ENCODE measurements at regions of chr5 and their contacts with region 1.

Region 1: GRCh38 chr5:91225848-91226686 is 157.1 kb downstream of the ARRDC3 start:
- DNase-seq: peak; percentile 59
- ATAC-seq: peak; percentile 96
- H3K4me3 ChIP-seq: no peak overlapping the region
- H3K27ac ChIP-seq: no peak overlapping the region
- H3K4me1 ChIP-seq: 0 out of 4 replicates have a peak, but pooled peaks cover 0 to 5% of the 10 kb centered on the region in 2 experiments
- H3K27me3 ChIP-seq: no peaks in the 10 kb centered on the region
- CTCF ChIP-seq: peak; percentile 58 to 98 (median 74)
- POLR2A ChIP-seq: no peak
- RAD21 ChIP-seq: peak; percentile 98

Region 2: DNA sequence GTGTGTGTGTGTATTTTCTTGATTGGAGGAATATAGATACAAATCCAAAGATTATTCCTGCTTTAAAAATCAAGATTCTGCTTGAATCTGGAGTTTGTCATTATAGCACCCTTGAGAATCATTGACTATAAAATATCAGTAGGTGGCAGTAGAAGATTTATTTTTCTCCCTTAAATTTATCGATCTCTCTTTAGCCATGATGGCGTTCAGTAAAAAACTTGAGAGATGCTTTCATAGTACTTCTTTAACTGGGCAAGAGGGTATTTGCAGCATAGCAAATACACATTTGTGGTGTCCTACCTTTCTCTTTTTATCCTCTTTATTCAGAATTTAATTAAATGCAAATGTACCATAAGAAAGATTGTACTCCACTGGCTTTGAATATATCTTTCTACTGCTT is 359.7 kb before region 1 on chr5:
- CTCF ChIA-PET with region 1: no interaction called
- POLR2A ChIA-PET with region 1: no interaction called
- RAD21 ChIA-PET with region 1: no interaction called
- intact Hi-C with region 1: loop called (anchors 5 kb)
- DNase-seq: peak; percentile 27
- ATAC-seq: peak; percentile 80
- H3K4me3 ChIP-seq: no peak overlapping the region
- H3K27ac ChIP-seq: no peak overlapping the region
- H3K4me1 ChIP-seq: no peaks in the 10 kb centered on the region
- H3K27me3 ChIP-seq: no peaks in the 10 kb centered on the region
- CTCF ChIP-seq: peak; percentile 29 to 66 (median 65); a peak in 4 of 6 replicates
- POLR2A ChIP-seq: no peak
- RAD21 ChIP-seq: peak; percentile 83

Region 3: GRCh38 chr5:91403438-91403837 is 177.4 kb after region 1 on chr5:
- CTCF ChIA-PET with region 1: no interaction called
- POLR2A ChIA-PET with region 1: no interaction called
- RAD21 ChIA-PET with region 1: no interaction called
- intact Hi-C with region 1: no loop called
- DNase-seq: no peak
- ATAC-seq: no peak
- H3K4me3 ChIP-seq: no peak overlapping the region
- H3K27ac ChIP-seq: no peak overlapping the region
- H3K4me1 ChIP-seq: no peaks in the 10 kb centered on the region
- H3K27me3 ChIP-seq: no peaks in the 10 kb centered on the region
- CTCF ChIP-seq: no peak
- POLR2A ChIP-seq: no peak
- RAD21 ChIP-seq: no peak

Region 4: GRCh38 chr5:91598227-91598626 is 372.2 kb after region 1 on chr5:
- CTCF ChIA-PET with region 1: no interaction called
- POLR2A ChIA-PET with region 1: no interaction called
- RAD21 ChIA-PET with region 1: no interaction called
- intact Hi-C with region 1: no loop called
- DNase-seq: no peak
- ATAC-seq: no peak
- H3K4me3 ChIP-seq: no peak overlapping the region
- H3K27ac ChIP-seq: no peak overlapping the region
- H3K4me1 ChIP-seq: no peaks in the 10 kb centered on the region
- H3K27me3 ChIP-seq: no peaks in the 10 kb centered on the region
- CTCF ChIP-seq: no peak
- POLR2A ChIP-seq: no peak
- RAD21 ChIP-seq: no peak

Measured in HCT116 (cell line).